ENCODE measurements at regions of chr17 and their contacts with region 1.

Region 1: DNA sequence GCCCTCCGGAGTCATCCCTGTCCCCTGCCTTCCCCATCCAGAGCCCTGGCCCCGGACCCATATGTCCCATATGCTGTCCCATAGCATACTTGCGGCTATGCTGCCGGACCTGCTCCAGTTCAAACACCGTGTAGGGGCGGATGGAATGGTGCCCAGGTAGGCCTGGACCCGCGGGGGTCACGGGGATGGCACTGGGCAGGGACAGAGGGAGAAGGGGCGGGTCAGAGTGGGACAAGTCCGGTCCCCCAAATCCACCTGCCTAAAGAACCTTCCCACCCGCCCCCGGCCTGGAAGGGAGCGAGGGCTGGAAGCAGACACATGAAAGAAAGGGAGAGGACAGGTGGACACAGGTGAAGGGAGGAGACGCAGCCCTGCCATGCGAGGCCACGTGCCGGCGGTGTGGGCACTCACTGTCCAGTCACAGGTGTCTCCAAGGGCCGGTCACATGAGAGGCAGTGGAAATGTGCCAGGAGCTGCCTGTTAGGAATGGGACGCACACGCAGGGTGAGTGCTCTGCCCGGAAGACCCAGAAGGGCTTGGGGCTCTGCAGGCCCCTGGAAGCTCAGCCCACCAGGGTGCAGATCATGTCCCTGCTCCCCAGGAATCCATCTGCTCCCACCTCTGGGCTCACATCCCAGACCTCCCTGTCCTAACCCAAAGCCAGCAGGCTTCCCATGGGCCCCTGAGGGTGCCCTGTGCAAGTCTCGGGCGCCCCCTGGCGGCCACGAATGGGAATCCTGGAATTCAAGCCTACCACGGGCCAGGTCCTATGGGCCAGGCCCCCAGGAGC is 14.0 kb downstream of the UBALD2 start:
- DNase-seq: peak; percentile 70
- H3K4me3 ChIP-seq: no peak overlapping the region
- H3K27ac ChIP-seq: no peak overlapping the region
- H3K4me1 ChIP-seq: no peaks in the 10 kb centered on the region
- H3K27me3 ChIP-seq: no peaks in the 10 kb centered on the region
- CTCF ChIP-seq: peak; percentile 89 to 91
- POLR2A ChIP-seq: no peak

Region 2: DNA sequence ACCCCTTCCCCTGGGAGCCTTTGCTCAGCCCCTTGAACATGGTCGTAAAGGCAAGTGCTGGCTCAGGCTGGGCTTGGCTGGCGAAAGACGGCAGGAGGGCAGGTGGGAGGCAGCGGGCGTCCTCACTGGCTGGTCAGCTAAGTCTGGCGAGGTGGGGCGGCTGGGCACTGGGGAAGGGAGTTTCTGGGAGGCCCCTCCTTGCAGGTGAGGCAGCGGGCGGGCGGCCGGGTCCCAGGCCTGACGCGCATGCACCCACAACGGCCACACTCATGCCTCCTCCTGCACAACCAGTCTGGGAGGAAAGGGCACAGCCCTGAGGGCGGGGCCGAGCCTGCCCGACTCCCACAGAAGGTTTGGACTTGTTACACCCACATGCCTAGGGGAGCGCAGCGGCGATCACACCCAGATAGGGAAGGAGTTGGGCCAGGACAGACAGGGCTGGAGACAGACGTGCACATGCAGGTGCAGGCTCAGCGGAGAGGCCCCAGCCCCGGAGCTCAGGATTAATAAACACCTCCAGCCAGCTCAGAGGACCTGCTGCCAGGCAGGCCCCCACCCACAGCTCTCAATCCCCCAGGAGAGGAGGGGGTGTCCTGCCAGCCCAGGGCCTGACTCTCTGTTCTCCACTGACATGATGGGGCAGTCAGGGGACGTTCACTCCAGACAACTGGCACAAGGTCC is 251.8 kb before region 1 on chr17 and contains the start of gene EVPL:
- CTCF ChIA-PET with region 1: interaction called, 4 read pairs
- POLR2A ChIA-PET with region 1: no interaction called
- dilution Hi-C with region 1: no loop called
- intact Hi-C with region 1: loop called (anchors 5 kb)
- DNase-seq: no peak
- H3K4me3 ChIP-seq: no peak within 1 kb of the TSS
- H3K27ac ChIP-seq: no peak within 1 kb of the TSS
- H3K4me1 ChIP-seq: peaks cover 9% of the 10 kb centered on the region
- H3K27me3 ChIP-seq: no peaks in the 10 kb centered on the region
- CTCF ChIP-seq: no peak
- POLR2A ChIP-seq: no peak
- total RNA-seq, gene EVPL: not detected in 2 replicates

Region 3: DNA sequence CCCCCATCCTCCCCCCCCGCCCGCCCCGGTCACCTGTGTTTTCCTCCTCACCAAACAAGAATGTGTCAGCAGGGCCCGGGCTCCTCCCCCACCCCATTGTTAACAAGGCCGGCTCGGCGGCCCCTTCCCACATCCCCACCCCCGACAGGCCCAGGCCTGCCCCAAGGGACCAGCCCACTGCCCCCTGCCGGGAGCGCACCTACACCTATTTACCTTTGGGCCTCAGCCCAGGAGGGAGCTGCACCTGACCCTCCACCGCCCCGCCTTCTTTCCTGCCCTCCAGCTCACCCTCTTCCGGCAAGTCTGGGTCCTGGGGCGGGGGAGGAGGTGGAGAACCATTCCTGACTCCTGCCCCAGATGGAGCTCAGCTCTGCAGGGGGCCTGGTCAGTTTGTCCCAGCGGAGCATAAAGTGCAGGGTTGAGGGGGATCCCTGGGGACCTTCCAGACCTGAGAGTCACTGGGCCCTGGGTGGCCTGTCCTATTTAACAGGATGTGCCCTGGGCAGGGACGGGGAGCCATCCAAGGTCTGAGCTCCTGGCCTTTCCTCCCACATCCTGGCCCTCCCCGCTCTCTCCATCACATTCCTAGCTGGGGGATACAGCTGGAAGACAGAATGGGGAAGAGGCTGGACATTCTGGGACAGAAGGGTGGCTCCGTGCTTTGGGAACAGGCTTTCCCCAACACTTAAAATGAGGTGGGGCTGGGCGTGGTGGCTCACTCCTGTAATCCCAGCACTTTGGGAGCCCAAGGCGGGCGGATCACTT is 146.4 kb before region 1 on chr17:
- CTCF ChIA-PET with region 1: interaction called, 320 read pairs
- POLR2A ChIA-PET with region 1: no interaction called
- dilution Hi-C with region 1: no loop called
- intact Hi-C with region 1: no loop called
- DNase-seq: no peak
- H3K4me3 ChIP-seq: no peak overlapping the region
- H3K27ac ChIP-seq: no peak overlapping the region
- H3K4me1 ChIP-seq: no peaks in the 10 kb centered on the region
- H3K27me3 ChIP-seq: peaks cover 2 to 4% of the 10 kb centered on the region in 2 experiments
- CTCF ChIP-seq: no peak
- POLR2A ChIP-seq: no peak

Region 4: DNA sequence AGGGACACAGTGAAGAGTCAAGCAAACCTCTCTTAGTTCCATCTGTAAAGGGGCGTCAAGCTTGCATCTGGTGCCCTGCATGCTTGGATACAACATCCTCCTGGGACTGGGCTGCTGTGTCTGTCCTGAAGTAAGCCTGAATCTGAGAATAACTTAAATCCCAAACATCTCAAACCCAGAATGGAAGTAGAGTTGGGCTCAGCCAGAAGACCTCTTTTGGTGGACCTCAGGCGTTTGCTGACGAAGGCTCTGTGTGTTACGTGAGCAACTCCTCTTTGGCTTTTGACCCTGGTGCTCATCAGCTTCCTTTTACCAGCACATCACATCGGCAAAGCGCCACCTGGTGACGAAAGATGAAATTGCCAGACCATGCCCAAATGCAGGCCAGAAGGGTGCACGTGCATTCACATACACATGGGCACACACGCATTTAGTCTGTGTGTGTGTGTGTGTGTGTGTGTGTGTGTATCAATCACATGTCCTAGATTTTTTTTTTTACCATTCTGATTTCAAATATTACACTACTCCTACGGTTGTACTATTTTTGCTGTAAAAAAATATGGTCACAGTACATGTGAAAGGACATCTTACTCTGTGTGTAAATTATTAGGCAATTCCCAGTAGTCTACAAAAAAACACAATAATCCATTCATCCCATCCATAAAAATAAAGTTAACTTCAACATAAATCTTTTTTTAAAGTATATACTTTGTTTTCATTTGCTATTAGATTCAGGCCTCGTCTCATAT is 97.0 kb before region 1 on chr17:
- CTCF ChIA-PET with region 1: interaction called, 43 read pairs
- POLR2A ChIA-PET with region 1: no interaction called
- dilution Hi-C with region 1: no loop called
- intact Hi-C with region 1: loop called (anchors 1 kb)
- DNase-seq: peak; percentile 93
- H3K4me3 ChIP-seq: no peak overlapping the region
- H3K27ac ChIP-seq: no peak overlapping the region
- H3K4me1 ChIP-seq: peaks cover 8% of the 10 kb centered on the region
- H3K27me3 ChIP-seq: no peaks in the 10 kb centered on the region
- CTCF ChIP-seq: peak; percentile 86 to 88
- POLR2A ChIP-seq: no peak

Region 5: GRCh38 chr17:76240461-76241203 is 38.5 kb before region 1 on chr17 and contains the start of gene RNF157:
- CTCF ChIA-PET with region 1: interaction called, 125 read pairs
- POLR2A ChIA-PET with region 1: no interaction called
- dilution Hi-C with region 1: no loop called
- intact Hi-C with region 1: no loop called
- DNase-seq: peak; percentile 53
- H3K4me3 ChIP-seq: peak within 1 kb of the TSS; percentile 20 to 54 (median 37)
- H3K27ac ChIP-seq: no peak within 1 kb of the TSS
- H3K4me1 ChIP-seq: peaks cover 7% of the 10 kb centered on the region
- H3K27me3 ChIP-seq: peaks cover 46 to 53% of the 10 kb centered on the region in 2 experiments
- CTCF ChIP-seq: no peak
- POLR2A ChIP-seq: no peak
- total RNA-seq, gene RNF157: 0.48 and 0.86 TPM in 2 replicates

Region 6: GRCh38 chr17:76264755-76265596 is 14.2 kb before region 1 on chr17 and contains the start of gene UBALD2:
- CTCF ChIA-PET with region 1: interaction called, 13 read pairs
- POLR2A ChIA-PET with region 1: interaction called, 4 read pairs
- dilution Hi-C with region 1: no loop called
- intact Hi-C with region 1: no loop called
- DNase-seq: peak; percentile 100
- H3K4me3 ChIP-seq: peak within 1 kb of the TSS; percentile 78 to 84 (median 80)
- H3K27ac ChIP-seq: peak within 1 kb of the TSS; percentile 97
- H3K4me1 ChIP-seq: peaks cover 54% of the 10 kb centered on the region
- H3K27me3 ChIP-seq: no peaks in the 10 kb centered on the region
- CTCF ChIP-seq: no peak
- POLR2A ChIP-seq: peak; percentile 42
- total RNA-seq, gene UBALD2: 70.9 and 75.2 TPM in 2 replicates

Region 7: DNA sequence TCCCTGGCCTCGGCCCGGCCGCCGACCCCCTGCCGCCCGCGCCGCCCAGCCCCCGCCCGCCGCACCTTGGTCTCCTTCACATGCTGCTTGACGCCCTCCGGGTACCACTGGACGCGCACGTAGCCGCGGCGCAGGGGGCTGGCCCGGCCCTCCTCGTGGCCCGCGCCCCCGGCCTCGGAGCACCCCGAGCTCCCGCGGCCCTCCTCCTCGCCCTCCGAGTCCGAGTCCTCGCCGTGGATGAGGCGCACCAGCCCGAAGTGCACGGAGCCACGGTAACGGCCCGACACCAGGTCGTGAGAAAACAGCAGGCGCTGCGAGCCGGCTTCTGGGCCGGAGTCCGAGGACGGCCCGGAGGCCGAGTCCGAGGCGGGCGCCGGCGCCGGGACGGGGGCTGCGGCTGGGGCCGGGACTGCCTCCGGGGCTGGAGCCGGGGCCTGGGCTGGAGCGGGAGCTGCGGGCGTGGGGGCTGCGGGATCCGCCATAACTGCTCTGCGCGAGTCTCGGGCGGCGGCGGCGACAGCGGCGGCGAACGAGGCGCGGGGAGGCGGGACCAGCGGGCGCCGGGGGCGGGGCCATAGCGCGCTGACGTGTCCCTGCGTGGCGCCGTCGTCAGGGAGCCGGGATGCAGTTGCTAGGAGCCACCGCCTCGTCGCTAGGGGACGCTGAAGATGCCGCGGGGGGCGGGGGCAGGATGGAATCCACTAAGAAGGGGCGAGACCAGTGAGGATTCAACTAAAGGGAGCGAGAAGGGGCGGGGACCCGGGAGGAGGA is 173.7 kb after region 1 on chr17 and contains the start of gene UBE2O:
- CTCF ChIA-PET with region 1: no interaction called
- POLR2A ChIA-PET with region 1: interaction called, 10 read pairs
- dilution Hi-C with region 1: no loop called
- intact Hi-C with region 1: no loop called
- DNase-seq: peak; percentile 84
- H3K4me3 ChIP-seq: peak within 1 kb of the TSS; percentile 66 to 96 (median 73)
- H3K27ac ChIP-seq: peak within 1 kb of the TSS; percentile 31
- H3K4me1 ChIP-seq: peaks cover 10% of the 10 kb centered on the region
- H3K27me3 ChIP-seq: no peaks in the 10 kb centered on the region
- CTCF ChIP-seq: peak; percentile 38 to 44
- POLR2A ChIP-seq: peak; percentile 35
- total RNA-seq, gene UBE2O: 32.8 and 34.1 TPM in 2 replicates